GM10248 (cell line): ENCODE measurements at regions of chrX and their contacts with region 1.

Region 1: GRCh38 chrX:130079824-130080406 is 30.4 kb downstream of the ELF4 start:
- DNase-seq: peak; percentile 56
- CTCF ChIP-seq: peak; percentile 69

Region 2: DNA sequence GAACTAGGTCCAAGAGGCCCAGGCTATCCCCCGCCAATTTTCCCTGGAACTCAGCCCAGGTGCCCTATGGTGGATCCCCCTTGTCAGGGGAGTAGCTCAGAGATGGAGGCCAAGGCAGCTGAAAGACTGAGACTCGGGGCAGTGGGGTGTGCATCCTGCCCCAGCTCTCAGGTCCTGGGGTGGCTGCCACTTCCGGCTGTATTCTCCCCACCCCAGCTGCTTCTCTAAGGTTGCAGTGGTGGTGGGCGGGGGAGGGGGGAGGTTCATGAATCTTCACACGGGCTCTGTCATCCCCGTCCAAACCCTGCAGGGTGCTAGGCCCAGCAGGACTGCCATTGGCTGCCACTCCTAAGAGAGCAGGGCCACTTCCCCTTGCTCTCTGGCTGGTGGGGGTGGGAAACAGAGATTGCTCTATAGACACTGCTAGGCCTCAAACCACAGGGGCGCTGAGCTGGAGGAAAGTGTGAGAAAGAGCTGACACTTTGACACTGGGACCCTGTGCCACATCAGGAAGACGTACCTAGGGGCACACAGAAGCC is 298.7 kb before region 1 on chrX:
- CTCF ChIA-PET with region 1: no interaction called
- POLR2A ChIA-PET with region 1: no interaction called
- DNase-seq: peak; percentile 81
- CTCF ChIP-seq: no peak

Region 3: GRCh38 chrX:130066975-130067615 is 12.8 kb before region 1 on chrX:
- CTCF ChIA-PET with region 1: interaction called, 20 read pairs
- POLR2A ChIA-PET with region 1: no interaction called
- DNase-seq: no peak
- CTCF ChIP-seq: no peak

Region 4: DNA sequence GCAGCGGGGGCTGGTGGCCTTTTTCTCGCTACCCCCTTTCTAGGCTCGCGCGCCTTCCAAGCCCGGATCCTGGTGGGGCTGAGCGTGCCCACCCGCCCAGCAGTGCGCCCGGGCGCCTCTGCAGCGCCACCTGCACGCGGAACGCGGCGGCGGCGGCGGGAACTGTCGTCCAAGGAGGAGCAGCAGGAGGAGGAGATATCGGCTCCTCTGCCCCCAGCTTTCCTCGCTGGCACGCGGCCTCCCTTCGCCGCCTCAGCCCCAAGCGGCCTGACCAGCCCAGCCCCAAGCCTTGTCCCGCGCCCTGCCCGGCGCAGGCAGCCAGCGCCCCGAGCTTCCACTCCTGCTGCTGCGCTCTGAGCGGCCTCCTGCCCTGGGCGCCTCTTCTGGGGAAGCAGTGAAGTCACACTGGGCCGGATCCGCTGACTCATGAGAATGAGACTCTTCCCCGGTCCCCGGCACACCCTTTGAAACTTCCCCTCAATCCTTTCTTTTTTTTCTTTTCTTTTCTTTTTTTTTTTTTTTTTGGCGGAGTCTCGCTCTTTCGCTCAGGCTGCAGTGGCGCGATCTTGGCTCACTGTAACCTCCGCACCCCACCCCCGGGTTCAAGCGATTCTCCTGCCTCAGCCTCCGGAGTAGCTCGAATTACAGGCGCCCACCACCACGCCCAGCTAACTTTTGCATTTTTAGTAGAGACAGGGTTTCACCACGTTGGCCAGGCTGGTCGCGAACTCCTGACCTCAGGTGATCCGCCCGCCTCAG is 41.0 kb after region 1 on chrX:
- CTCF ChIA-PET with region 1: interaction called, 92 read pairs
- POLR2A ChIA-PET with region 1: no interaction called
- DNase-seq: peak; percentile 75
- CTCF ChIP-seq: peak; percentile 71

Region 5: DNA sequence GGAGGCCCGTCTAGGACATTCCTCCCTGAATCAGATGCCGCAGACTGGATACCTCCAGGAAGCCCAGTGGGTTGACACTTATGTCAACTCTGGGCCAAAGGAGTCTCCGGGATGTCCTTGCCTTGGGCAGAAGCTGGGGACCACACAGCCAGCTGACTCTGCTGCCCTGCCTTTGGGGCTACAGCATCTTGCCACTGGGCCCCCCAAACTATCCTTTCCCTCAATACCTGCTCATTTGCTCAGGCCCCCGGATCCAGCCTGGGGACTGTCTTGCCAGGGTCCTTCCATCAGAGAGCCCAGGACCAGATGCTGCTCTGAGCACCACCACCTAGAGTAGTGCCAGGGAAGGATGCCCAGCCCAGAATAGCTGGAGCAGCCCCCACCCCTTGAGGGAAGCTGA is 110.9 kb after region 1 on chrX:
- CTCF ChIA-PET with region 1: interaction called, 56 read pairs
- POLR2A ChIA-PET with region 1: no interaction called
- DNase-seq: no peak
- CTCF ChIP-seq: no peak